SK-N-SH (cell line): ENCODE measurements at regions of chr1 and their contacts with region 1.

Region 1: DNA sequence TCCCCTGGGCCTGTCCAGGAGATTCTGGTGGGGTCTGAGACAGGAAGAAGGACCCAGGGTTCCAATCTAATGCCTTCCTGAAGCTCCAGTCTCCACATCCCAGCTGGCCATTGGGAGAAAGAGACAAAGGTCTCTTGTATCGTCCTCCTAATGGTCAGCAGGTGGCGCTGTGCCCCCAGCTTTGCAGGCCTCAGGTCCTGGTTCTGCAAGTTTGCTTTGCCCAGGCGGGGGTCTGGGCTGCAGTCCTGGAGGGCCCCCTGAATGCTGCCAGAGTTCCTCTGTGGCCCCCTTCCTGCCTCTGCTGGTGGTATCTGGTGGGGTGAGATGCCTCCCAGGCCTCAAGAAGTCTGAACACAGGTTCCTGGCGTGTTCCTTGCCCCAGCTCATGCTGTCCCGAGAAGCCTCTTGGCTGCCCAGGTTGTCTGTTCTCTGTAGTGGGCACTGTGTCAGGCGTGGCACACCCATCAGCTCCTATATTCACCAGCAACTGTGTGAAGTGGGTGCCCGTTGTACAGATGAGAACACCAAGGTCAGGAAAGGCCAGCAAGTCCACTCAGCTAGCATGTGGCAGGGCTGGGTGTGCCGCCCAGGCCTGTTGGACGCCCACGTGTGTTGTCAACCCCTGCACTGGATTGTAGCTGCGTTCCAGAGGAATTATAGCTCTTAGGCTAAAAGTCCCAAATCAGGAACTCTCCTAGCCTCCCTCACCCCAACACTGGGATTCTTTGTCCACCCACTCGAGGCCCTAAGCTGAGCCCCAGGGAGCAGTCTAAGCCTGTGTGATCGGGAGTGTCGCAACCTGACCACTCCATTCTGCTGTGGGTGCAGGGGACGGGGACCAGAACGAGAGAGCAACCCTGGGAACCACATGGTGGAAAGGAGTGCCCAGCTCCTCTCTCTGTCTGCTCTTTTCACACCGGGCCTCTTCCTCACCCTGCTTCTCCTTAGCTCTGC is 33.9 kb upstream of the CSF3R start:
- DNase-seq: peak; percentile 87
- H3K4me3 ChIP-seq: peak overlapping the region in 1 of 2 experiments; percentile 43; a peak in 1 of 4 replicates
- H3K27ac ChIP-seq: no peak overlapping the region
- H3K4me1 ChIP-seq: peaks cover 0 to 3% of the 10 kb centered on the region in 2 experiments; a peak in 1 of 4 replicates
- H3K27me3 ChIP-seq: no peaks in the 10 kb centered on the region
- CTCF ChIP-seq: peak; percentile 83
- EP300 ChIP-seq: no peak
- RAD21 ChIP-seq: peak; percentile 93

Region 2: GRCh38 chr1:35914717-35915116 is 601.9 kb before region 1 on chr1:
- CTCF ChIA-PET with region 1: no interaction called
- POLR2A ChIA-PET with region 1: no interaction called
- DNase-seq: no peak
- H3K4me3 ChIP-seq: no peak overlapping the region
- H3K27ac ChIP-seq: no peak overlapping the region
- H3K4me1 ChIP-seq: no peaks in the 10 kb centered on the region
- H3K27me3 ChIP-seq: no peaks in the 10 kb centered on the region
- CTCF ChIP-seq: no peak
- EP300 ChIP-seq: no peak
- RAD21 ChIP-seq: no peak

Region 3: DNA sequence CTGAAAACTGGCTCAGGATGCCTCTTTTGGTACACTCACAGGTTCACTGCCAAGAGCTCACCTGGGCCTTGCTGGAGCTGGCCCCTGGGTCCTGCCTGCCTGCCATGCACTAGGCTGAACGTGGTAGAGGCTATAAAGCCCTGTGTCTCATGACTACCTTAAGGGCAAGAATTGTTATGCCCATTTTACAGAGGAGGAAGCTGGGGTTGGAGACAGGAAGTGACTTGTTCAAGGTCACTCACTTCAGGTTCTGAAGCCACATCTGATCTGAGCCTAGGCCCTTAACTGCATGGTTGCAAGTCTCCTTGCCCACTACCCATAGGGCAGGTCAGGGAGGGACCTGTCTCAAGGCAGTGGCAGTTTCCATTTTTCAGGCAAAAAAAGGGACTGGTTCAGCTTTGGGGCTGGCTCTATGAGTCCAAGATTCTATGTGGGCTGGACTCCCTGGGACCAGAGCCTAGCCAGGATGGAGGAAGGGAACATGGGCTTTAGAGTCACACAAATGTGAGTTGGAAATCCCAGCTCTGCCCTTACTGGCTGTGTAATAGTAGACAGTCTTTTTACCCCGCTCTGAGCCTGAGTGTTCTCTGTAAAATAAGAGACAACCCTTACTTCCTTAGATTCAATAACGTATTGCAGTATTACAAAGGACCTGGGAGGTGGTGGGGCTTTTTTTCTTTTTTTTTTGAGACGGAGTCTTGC is 138.7 kb before region 1 on chr1:
- CTCF ChIA-PET with region 1: no interaction called
- POLR2A ChIA-PET with region 1: no interaction called
- DNase-seq: no peak
- H3K4me3 ChIP-seq: no peak overlapping the region
- H3K27ac ChIP-seq: no peak overlapping the region
- H3K4me1 ChIP-seq: peaks cover 30 to 42% of the 10 kb centered on the region in 2 experiments
- H3K27me3 ChIP-seq: no peaks in the 10 kb centered on the region
- CTCF ChIP-seq: no peak
- EP300 ChIP-seq: no peak
- RAD21 ChIP-seq: no peak

Region 4: DNA sequence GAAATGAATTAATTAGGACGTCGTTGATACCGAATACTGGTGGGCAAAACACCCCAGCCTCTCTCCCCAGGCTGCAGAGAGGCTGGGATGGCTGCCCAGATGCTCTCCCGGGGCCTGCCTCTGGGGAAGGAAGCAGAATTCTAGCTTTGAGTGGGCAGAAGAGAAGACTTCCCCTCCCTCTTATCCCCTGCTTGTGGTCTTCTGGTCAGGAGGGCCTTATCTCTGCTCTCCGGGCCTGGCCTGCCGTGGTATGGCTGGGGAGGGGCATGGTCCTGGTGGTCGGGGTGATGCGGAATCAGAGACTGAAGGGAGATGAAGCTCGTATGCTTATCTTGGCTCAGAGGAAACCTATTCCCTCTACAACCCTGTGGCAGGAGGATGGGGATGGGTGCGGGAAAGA is 24.1 kb before region 1 on chr1:
- CTCF ChIA-PET with region 1: interaction called, 34 read pairs
- POLR2A ChIA-PET with region 1: no interaction called
- DNase-seq: no peak
- H3K4me3 ChIP-seq: no peak overlapping the region
- H3K27ac ChIP-seq: no peak overlapping the region
- H3K4me1 ChIP-seq: no peaks in the 10 kb centered on the region; a peak in 1 of 4 replicates
- H3K27me3 ChIP-seq: no peaks in the 10 kb centered on the region; the same call in 1 of the 2 replicates
- CTCF ChIP-seq: no peak
- EP300 ChIP-seq: no peak
- RAD21 ChIP-seq: no peak

Region 5: DNA sequence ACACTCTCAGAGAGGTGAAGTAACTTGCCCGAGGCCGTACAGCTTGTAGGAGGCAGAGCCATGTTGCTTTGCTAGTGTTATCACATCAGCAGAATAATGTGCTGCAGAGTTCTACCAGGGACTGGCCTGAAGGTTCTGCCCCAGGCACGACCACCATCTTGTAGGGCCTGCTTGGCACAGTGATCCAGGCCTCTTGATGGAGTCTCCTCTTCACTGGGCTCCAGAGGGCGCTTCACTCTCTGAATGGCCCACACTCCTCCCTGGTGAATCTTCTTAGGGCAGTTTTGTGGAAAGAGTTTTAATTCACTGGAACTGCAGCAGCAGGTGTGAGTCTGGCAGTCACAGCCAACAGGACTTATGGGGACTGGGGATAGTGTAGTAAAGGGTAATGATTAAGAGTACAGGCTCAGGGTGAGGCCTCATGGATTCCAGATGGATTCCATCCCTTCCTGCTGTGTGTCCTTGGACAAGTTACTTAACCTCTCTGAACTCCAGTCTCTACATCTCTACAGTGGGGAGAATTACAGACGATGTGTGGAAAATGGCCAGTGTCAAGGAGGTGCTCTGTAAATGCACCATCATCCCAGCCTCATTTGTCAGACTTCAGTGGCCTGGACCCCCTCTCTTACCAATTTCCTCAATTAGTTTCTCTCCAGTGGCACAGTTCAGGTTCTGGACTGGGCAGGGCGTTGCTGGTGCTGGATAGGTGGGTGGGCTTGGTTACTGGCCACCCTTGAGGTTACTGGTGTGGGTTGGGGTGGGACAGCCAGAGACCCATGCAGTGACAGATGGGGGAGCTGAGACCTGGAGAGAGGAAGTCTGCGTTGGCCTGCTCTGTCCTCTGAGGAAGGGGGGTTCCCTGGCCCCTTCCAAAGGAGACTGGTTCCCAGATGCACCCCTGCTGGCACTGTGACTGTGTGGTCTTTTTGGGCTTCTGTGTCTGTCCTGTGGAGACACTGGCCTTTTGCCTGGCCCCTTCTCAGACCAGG is 12.0 kb after region 1 on chr1:
- CTCF ChIA-PET with region 1: interaction called, 41 read pairs
- POLR2A ChIA-PET with region 1: no interaction called
- DNase-seq: no peak
- H3K4me3 ChIP-seq: no peak overlapping the region
- H3K27ac ChIP-seq: no peak overlapping the region
- H3K4me1 ChIP-seq: peaks cover 0 to 21% of the 10 kb centered on the region in 2 experiments; a peak in 1 of 4 replicates
- H3K27me3 ChIP-seq: no peaks in the 10 kb centered on the region
- CTCF ChIP-seq: peak; percentile 15; the same call in 1 of the 2 replicates
- EP300 ChIP-seq: no peak
- RAD21 ChIP-seq: no peak

Region 6: GRCh38 chr1:36542962-36543515 is 26.4 kb after region 1 on chr1:
- CTCF ChIA-PET with region 1: interaction called, 16 read pairs
- POLR2A ChIA-PET with region 1: no interaction called
- DNase-seq: peak; percentile 44
- H3K4me3 ChIP-seq: no peak overlapping the region; a peak in 1 of 4 replicates
- H3K27ac ChIP-seq: no peak overlapping the region
- H3K4me1 ChIP-seq: no peaks in the 10 kb centered on the region; a peak in 1 of 4 replicates
- H3K27me3 ChIP-seq: no peaks in the 10 kb centered on the region; the same call in 1 of the 2 replicates
- CTCF ChIP-seq: 0 out of 2 replicates have a peak, but pooled peaks have one; percentile 22
- EP300 ChIP-seq: no peak
- RAD21 ChIP-seq: no peak

Region 7: GRCh38 chr1:36565576-36566501 is 49.2 kb after region 1 on chr1:
- CTCF ChIA-PET with region 1: interaction called, 14 read pairs
- POLR2A ChIA-PET with region 1: no interaction called
- DNase-seq: no peak
- H3K4me3 ChIP-seq: no peak overlapping the region
- H3K27ac ChIP-seq: no peak overlapping the region
- H3K4me1 ChIP-seq: peaks cover 0 to 6% of the 10 kb centered on the region in 2 experiments; a peak in 1 of 4 replicates
- H3K27me3 ChIP-seq: no peaks in the 10 kb centered on the region
- CTCF ChIP-seq: no peak
- EP300 ChIP-seq: no peak
- RAD21 ChIP-seq: no peak

Region 8: GRCh38 chr1:36807262-36807661 is 290.6 kb after region 1 on chr1:
- CTCF ChIA-PET with region 1: no interaction called
- POLR2A ChIA-PET with region 1: no interaction called
- DNase-seq: no peak
- H3K4me3 ChIP-seq: no peak overlapping the region
- H3K27ac ChIP-seq: no peak overlapping the region
- H3K4me1 ChIP-seq: peaks cover 0 to 6% of the 10 kb centered on the region in 2 experiments; a peak in 1 of 4 replicates
- H3K27me3 ChIP-seq: no peaks in the 10 kb centered on the region
- CTCF ChIP-seq: no peak
- EP300 ChIP-seq: no peak
- RAD21 ChIP-seq: no peak

Region 9: DNA sequence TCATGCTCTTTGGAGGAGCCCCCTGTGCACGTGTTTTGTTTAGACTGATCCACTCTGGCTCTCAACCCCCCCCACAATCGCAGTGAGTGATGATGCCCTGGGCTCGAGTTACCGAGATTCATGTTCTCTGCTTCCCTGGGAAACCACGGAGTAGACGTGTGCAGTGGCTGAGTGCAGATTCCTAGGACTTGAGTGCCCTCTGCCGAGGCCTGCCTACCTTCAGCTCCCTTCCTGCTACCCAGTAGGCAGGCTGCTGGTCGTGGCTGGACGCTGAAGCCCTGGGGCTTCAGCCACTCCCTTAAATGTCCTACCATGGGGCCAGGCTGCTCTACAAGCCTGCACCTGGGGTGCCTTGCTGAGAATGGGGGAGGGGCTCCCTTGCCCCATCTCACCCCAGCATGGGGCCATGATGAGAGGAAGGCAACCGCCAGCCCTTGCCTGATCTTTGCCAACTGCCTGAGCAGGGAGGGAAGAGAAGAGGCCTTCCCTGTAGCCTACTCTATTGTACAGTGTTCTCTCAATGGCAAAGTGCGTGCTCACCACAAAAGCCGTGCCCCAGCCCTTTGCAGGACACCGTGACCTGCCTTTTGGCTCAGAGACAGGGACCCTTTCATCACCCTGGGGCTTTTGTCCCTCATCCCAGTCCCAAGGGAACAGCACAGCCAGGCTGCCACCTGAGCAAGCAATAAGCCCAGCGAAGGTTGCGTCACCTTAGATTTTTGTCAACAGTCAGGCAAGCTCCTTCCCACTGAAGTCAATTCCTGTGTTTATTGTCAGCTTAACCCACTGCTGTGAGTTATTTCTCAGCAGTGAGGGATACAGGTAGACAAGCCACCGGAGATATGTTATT is 521.8 kb after region 1 on chr1:
- CTCF ChIA-PET with region 1: interaction called, 12 read pairs
- POLR2A ChIA-PET with region 1: no interaction called
- DNase-seq: peak; percentile 54
- H3K4me3 ChIP-seq: no peak overlapping the region
- H3K27ac ChIP-seq: no peak overlapping the region
- H3K4me1 ChIP-seq: peaks cover 0 to 2% of the 10 kb centered on the region in 2 experiments; a peak in 1 of 4 replicates
- H3K27me3 ChIP-seq: 0 out of 2 replicates have a peak, but pooled peaks cover 5% of the 10 kb centered on the region
- CTCF ChIP-seq: no peak
- EP300 ChIP-seq: no peak
- RAD21 ChIP-seq: peak; percentile 70

Region 10: DNA sequence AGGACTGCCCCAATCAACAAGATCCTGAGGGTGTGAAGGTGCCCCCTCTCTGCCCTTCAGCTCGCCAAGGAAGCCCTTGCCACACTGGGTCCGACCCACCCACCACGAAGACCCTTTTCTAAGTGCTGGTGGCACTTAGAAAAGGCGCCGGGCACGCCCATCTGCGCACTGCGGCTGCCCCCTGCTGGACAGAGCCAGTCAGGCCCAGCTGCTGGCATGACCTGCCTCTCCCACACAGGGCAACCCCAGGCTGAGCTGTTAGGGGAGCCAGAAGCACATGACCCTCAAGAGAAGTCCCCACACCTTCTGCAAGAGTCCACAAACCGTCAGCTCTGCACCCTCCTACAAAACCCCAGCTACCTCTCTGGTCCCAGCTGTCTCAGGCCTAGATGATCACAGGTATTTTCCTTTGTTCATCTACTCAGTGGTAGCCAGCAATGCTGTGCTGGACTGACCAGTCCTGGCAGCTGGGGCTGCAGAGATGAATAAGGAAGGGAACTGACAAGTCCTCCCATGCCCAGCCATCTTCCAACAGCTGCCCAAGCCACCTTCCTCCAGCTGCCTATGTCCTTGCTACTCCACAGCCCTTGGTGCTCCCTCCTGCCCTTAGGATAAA is 917.8 kb after region 1 on chr1:
- CTCF ChIA-PET with region 1: interaction called, 40 read pairs
- POLR2A ChIA-PET with region 1: no interaction called
- DNase-seq: peak; percentile 90
- H3K4me3 ChIP-seq: no peak overlapping the region; a peak in 1 of 4 replicates
- H3K27ac ChIP-seq: no peak overlapping the region
- H3K4me1 ChIP-seq: no peaks in the 10 kb centered on the region
- H3K27me3 ChIP-seq: peaks cover 19% of the 10 kb centered on the region; the same call in 1 of the 2 replicates
- CTCF ChIP-seq: peak; percentile 94
- EP300 ChIP-seq: no peak
- RAD21 ChIP-seq: peak; percentile 93